CD4-positive, alpha-beta memory T cell (primary cell): ENCODE measurements at regions of chr12 and their contacts with region 1.

Region 1: DNA sequence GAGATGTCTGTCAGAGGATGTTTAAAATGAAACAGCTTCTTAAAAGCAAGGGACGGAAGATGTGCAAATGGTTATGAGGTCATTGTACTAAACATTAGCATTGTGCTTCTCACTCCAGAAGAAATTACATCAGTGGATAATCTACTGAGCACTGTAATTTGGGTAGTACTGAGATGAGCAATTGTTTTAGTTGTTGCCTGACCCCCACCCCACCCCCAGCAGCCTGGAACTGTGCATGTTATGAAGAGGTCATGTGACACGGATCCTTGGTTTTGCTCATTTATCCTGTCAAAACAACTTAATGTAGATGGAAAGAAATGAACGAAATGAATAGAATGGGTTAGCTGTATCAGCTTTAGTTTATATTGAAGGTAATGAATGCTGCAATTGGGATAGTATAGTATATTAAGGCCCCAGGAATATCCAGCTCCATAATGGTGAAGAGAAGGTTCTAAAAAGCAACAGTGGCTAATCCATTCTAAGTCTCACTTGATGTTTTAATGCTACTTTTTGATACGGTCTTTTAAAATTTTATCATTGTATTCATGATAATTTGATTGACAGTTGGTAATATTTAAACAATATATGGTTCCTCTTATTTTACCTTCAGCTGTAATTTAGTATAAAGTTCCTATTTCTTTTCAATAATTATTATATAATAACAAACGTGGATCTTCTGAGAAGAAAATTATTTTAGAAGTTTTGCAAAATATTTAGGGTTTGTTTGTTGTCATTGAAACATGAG is 58.5 kb downstream of the WNK1 start:
- DNase-seq: no peak
- H3K4me3 ChIP-seq: peak overlapping the region in 1 of 2 donors; percentile 9
- H3K4me3 Mint-ChIP-seq: peak overlapping the region in 7 of 8 donors; percentile 21 to 76 (median 62)
- H3K27ac ChIP-seq: peak overlapping the region; percentile 11
- H3K27ac Mint-ChIP-seq: peak overlapping the region; percentile 14 to 86 (median 78)
- H3K4me1 ChIP-seq: peaks cover 86% of the 10 kb centered on the region
- H3K4me1 Mint-ChIP-seq: peaks cover 50 to 81% (median 66%) of the 10 kb centered on the region in 4 donors
- H3K27me3 ChIP-seq: no peaks in the 10 kb centered on the region
- H3K27me3 Mint-ChIP-seq: no peaks in the 10 kb centered on the region

Region 2: DNA sequence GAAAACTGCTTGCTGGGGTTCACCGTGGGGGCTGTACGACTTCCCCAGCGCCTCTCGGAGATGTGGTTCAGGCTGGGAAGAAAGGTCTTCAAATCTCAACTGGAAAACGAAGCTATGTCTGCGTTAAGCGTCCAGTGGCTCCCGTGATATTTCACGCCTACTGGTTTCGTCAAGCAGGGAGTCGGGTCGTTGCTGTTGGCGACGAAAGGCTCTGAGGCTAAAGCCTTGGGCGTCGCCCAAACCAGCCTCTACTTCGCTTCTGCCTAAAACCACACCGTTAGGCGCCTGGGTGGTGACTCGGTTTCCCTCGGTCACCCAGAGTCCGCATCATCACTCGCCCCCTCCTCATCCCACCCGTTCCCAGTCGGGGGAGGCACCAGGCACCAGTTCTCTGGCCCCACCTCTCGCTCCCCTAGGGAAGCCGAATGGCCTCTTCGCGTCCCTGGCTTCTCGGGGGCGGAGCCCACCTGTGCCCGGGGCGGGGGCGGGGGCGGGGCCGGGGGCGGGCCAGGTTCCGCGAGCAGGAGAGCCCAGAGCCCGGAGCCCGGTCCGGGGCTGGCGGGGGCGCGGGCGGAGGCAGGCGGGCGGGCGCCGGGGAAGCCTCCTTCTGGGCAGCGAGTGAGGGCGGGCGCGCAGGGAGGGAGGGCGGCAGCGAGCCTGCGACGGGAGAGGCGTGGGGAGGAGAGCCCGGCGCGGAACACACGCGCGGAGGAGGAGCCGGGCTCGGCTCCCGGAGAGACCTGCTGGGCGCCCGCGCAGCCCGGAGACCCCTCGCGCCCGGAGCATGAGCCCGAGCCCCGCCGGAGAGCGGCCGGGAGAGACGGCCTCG is 351.2 kb before region 1 on chr12 and contains the start of gene B4GALNT3:
- CTCF ChIA-PET with region 1: no interaction called
- POLR2A ChIA-PET with region 1: no interaction called
- intact Hi-C with region 1: loop called (anchors 10 kb)
- DNase-seq: peak; percentile 42 to 62 (median 43)
- H3K4me3 ChIP-seq: peak within 1 kb of the TSS; percentile 58 to 72
- H3K4me3 Mint-ChIP-seq: peak within 1 kb of the TSS; percentile 79 to 92 (median 86)
- H3K27ac ChIP-seq: no peak within 1 kb of the TSS
- H3K27ac Mint-ChIP-seq: peak within 1 kb of the TSS in 5 of 7 donors; percentile 22 to 77 (median 69)
- H3K4me1 ChIP-seq: peaks cover 9% of the 10 kb centered on the region
- H3K4me1 Mint-ChIP-seq: peaks cover 17 to 42% (median 22%) of the 10 kb centered on the region in 4 donors
- H3K27me3 ChIP-seq: no peaks in the 10 kb centered on the region
- H3K27me3 Mint-ChIP-seq: peaks cover 0 to 3% of the 10 kb centered on the region in 2 donors
- total RNA-seq, gene B4GALNT3: 2.1 to 2.6 TPM

Region 3: GRCh38 chr12:614411-614970 is 196.4 kb before region 1 on chr12:
- CTCF ChIA-PET with region 1: interaction called, 113 read pairs
- POLR2A ChIA-PET with region 1: interaction called, 3 read pairs
- intact Hi-C with region 1: no loop called
- DNase-seq: peak in 3 of 5 donors; percentile 10 to 18 (median 18)
- H3K4me3 ChIP-seq: no peak overlapping the region
- H3K4me3 Mint-ChIP-seq: no peak overlapping the region
- H3K27ac ChIP-seq: no peak overlapping the region
- H3K27ac Mint-ChIP-seq: peak overlapping the region in 2 of 7 donors; percentile 36 to 66
- H3K4me1 ChIP-seq: peaks cover 20% of the 10 kb centered on the region
- H3K4me1 Mint-ChIP-seq: peaks cover 16 to 41% (median 28%) of the 10 kb centered on the region in 4 donors
- H3K27me3 ChIP-seq: no peaks in the 10 kb centered on the region
- H3K27me3 Mint-ChIP-seq: no peaks in the 10 kb centered on the region

Region 4: DNA sequence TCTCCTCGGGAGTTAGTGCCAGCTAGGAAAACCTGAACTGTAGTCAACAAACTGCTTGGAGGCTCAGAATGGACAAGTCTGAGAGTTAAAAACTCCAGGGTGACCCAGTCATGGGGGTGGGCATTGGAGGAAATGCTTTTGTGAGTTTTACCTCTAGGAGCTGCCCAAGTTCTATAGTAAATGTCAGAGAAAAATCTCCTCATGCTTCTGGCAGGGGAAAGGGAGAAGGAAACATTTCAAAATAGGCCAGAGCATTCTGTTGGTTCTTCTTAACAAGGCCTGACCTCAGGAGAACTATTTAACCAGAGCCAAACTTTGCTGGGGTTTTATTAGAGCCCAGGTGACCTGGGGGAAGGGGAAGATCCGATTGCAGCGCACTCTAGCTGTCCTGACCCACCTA is 159.9 kb before region 1 on chr12:
- CTCF ChIA-PET with region 1: interaction called, 11 read pairs
- POLR2A ChIA-PET with region 1: interaction called, 4 read pairs
- intact Hi-C with region 1: loop called (anchors 2 kb)
- DNase-seq: no peak
- H3K4me3 ChIP-seq: no peak overlapping the region
- H3K4me3 Mint-ChIP-seq: no peak overlapping the region
- H3K27ac ChIP-seq: no peak overlapping the region
- H3K27ac Mint-ChIP-seq: peak overlapping the region in 1 of 7 donors; percentile 26
- H3K4me1 ChIP-seq: no peaks in the 10 kb centered on the region
- H3K4me1 Mint-ChIP-seq: peaks cover 6 to 8% (median 8%) of the 10 kb centered on the region in 4 donors
- H3K27me3 ChIP-seq: no peaks in the 10 kb centered on the region
- H3K27me3 Mint-ChIP-seq: no peaks in the 10 kb centered on the region

Region 5: DNA sequence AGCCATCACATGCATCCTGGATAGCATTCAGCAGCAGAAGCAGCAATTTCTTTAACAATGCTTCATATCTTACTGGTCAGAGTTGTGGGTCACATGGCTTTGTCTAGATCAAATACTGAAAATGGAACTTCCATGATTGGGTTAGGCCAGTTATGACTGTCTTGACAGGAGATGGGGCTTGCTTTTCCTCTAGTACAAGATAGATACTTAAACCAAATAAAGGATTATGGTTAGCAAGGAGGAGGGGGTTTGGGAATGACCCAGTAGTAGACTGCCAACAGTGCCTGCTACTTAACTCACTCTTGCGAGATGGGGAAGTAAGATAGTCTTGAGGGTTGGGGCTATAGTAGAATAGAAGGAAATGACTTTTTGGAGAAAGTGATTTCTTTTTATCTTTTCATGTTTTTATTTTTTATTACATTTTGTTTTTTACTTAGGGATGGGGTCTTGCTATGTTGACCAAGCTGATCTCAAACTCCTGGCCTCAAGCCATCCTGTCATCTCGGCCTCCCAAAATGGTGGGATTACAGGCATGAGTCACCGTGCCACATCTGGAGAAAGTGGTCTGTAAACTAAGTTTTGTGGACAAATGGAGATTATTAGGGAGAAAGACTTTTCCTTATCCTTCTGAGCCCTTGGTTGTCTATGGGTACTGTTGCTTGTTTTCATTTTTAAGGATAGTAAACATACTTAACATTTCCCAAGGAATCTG is 20.8 kb before region 1 on chr12:
- CTCF ChIA-PET with region 1: interaction called, 10 read pairs
- POLR2A ChIA-PET with region 1: interaction called, 4 read pairs
- intact Hi-C with region 1: no loop called
- DNase-seq: no peak
- H3K4me3 ChIP-seq: no peak overlapping the region
- H3K4me3 Mint-ChIP-seq: peak overlapping the region; percentile 15 to 74 (median 57)
- H3K27ac ChIP-seq: no peak overlapping the region
- H3K27ac Mint-ChIP-seq: peak overlapping the region; percentile 60 to 81 (median 66)
- H3K4me1 ChIP-seq: peaks cover 95% of the 10 kb centered on the region
- H3K4me1 Mint-ChIP-seq: peaks cover 52 to 90% (median 75%) of the 10 kb centered on the region in 4 donors
- H3K27me3 ChIP-seq: no peaks in the 10 kb centered on the region
- H3K27me3 Mint-ChIP-seq: no peaks in the 10 kb centered on the region

Region 6: GRCh38 chr12:949453-950191 is 138.8 kb after region 1 on chr12 and contains the start of gene RAD52:
- CTCF ChIA-PET with region 1: interaction called, 24 read pairs
- POLR2A ChIA-PET with region 1: interaction called, 6 read pairs
- intact Hi-C with region 1: loop called (anchors 1 kb)
- DNase-seq: peak; percentile 96 to 97 (median 96)
- H3K4me3 ChIP-seq: peak within 1 kb of the TSS; percentile 70 to 98
- H3K4me3 Mint-ChIP-seq: peak within 1 kb of the TSS; percentile 92 to 97 (median 95)
- H3K27ac ChIP-seq: peak within 1 kb of the TSS; percentile 75
- H3K27ac Mint-ChIP-seq: peak within 1 kb of the TSS; percentile 93 to 96 (median 94)
- H3K4me1 ChIP-seq: peaks cover 22% of the 10 kb centered on the region
- H3K4me1 Mint-ChIP-seq: peaks cover 18 to 41% (median 28%) of the 10 kb centered on the region in 4 donors
- H3K27me3 ChIP-seq: no peaks in the 10 kb centered on the region
- H3K27me3 Mint-ChIP-seq: no peaks in the 10 kb centered on the region
- total RNA-seq, gene RAD52: 30.7 to 31.5 TPM

Region 7: DNA sequence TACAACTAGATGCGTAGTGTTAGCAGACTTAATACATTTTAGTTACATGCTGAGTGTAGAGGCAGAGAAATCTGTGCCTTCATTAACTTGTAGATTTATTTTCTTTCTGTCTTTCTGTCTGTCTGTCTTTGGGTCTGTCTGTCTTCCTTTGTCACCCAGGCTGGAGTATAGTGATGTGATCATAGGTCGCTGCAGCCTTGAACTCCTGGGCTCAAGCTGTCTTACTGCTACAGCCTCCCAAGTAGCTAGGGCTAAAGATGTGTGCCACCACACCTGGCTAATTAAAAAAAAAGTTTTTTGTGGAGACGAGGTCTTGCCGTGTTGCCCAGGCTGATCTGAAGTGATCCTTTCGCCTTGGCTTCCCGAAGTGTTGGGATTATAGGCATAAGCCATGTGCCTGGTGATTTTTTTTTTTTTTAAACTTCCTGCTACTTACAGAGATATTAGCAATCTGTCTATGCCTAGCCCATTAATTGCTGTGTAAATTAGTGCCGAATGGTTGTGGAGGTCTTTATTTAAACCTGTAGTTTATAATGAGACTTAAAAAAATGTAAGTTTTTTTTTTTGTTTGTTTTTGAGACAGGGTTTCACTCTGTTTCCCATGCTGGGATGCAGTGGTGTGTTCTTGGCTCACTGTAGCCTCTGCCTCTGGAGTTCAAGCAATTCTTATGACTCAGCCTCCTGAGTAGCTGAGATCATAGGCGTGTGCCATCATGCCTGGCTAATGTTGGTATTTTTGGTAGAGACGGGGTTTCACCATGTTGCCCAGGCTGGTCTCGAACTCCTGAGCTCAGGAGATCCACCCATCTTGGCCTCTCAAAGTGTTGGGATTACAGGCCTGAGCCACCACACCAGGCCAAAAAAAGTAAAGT is 203.0 kb after region 1 on chr12:
- CTCF ChIA-PET with region 1: no interaction called
- POLR2A ChIA-PET with region 1: no interaction called
- intact Hi-C with region 1: no loop called
- DNase-seq: no peak
- H3K4me3 ChIP-seq: no peak overlapping the region
- H3K4me3 Mint-ChIP-seq: no peak overlapping the region
- H3K27ac ChIP-seq: no peak overlapping the region
- H3K27ac Mint-ChIP-seq: no peak overlapping the region
- H3K4me1 ChIP-seq: no peaks in the 10 kb centered on the region
- H3K4me1 Mint-ChIP-seq: peaks cover 0 to 6% (median 4%) of the 10 kb centered on the region in 4 donors
- H3K27me3 ChIP-seq: no peaks in the 10 kb centered on the region
- H3K27me3 Mint-ChIP-seq: no peaks in the 10 kb centered on the region